H1 (cell line): ENCODE measurements at regions of chr14 and their contacts with region 1.

Region 1: GRCh38 chr14:105549481-105549880 is 23.1 kb downstream of the TMEM121 start:
- DNase-seq: no peak
- H3K4me3 ChIP-seq: no peak overlapping the region
- H3K27ac ChIP-seq: no peak overlapping the region
- H3K4me1 ChIP-seq: no peaks in the 10 kb centered on the region
- H3K27me3 ChIP-seq: no peaks in the 10 kb centered on the region
- CTCF ChIP-seq: no peak
- EP300 ChIP-seq: no peak
- POLR2A ChIP-seq: no peak
- RAD21 ChIP-seq: no peak

Region 2: GRCh38 chr14:105517096-105517495 is 32.4 kb before region 1 on chr14:
- CTCF ChIA-PET with region 1: no interaction called
- POLR2A ChIA-PET with region 1: no interaction called
- DNase-seq: no peak
- H3K4me3 ChIP-seq: no peak overlapping the region
- H3K27ac ChIP-seq: no peak overlapping the region
- H3K4me1 ChIP-seq: no peaks in the 10 kb centered on the region
- H3K27me3 ChIP-seq: peaks cover 0 to 2% (median 0%) of the 10 kb centered on the region in 4 experiments; a peak in 1 of 7 replicates
- CTCF ChIP-seq: no peak
- EP300 ChIP-seq: no peak
- POLR2A ChIP-seq: no peak
- RAD21 ChIP-seq: no peak

Region 3: GRCh38 chr14:105537369-105538164 is 11.9 kb before region 1 on chr14:
- CTCF ChIA-PET with region 1: interaction called, 21 read pairs
- POLR2A ChIA-PET with region 1: no interaction called
- DNase-seq: peak in 1 of 2 experiments; percentile 86
- H3K4me3 ChIP-seq: no peak overlapping the region
- H3K27ac ChIP-seq: no peak overlapping the region
- H3K4me1 ChIP-seq: no peaks in the 10 kb centered on the region
- H3K27me3 ChIP-seq: no peaks in the 10 kb centered on the region; a peak in 1 of 7 replicates
- CTCF ChIP-seq: peak in 2 of 3 experiments; percentile 69 to 82; a peak in 3 of 4 replicates
- EP300 ChIP-seq: no peak
- POLR2A ChIP-seq: no peak
- RAD21 ChIP-seq: peak; percentile 64 to 79